ENCODE measurements at regions of chr17 and their contacts with region 1.

Region 1: GRCh38 chr17:73371285-73371684 is 59.5 kb upstream of the CDC42EP4 start:
- DNase-seq: no peak
- ATAC-seq: no peak
- H3K4me3 Mint-ChIP-seq: no peak overlapping the region
- H3K27ac Mint-ChIP-seq: no peak overlapping the region
- H3K4me1 Mint-ChIP-seq: no peaks in the 10 kb centered on the region
- H3K27me3 Mint-ChIP-seq: no peaks in the 10 kb centered on the region

Region 2: DNA sequence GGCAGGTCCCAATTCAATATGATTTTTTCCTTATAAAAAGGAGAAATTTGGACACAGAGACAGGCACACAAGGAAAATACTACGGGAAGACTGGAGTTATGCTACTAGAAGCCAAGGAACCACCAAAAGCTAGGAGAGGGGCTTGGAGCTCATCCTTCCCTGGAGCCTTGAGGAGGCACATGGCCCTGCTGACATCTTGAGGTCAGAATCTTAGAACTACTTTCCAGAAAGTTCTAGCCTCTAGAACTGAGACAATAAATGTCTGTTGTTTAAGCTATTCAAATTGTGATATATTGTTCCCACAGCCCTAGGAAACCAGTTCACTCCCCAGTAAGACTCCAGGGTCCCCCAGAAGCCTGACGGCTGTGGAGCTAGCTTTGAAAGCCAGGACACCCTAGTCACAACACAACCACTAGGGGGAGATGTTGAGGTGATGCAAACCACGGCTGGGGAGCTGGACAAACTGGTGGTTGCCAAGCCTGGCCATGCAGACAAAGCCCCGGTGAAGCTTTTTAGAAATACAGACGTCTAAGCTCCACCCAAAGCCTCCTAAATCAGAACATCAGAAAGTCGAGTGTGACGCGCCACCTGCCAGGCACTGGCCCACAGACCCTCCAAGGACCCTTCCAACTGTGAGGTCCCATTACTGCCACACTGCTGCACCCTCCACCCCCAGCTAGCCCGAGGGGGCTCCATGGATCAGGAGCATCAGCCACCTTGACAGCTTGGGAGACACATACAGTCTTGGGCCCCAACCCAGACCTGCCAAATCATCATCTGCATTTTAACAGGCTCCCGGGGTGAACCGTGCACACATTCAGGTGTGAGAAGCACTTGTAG is 385.2 kb before region 1 on chr17:
- CTCF ChIA-PET with region 1: interaction called, 4 read pairs
- POLR2A ChIA-PET with region 1: no interaction called
- intact Hi-C with region 1: loop called in 1 of 2 experiments (anchors 2 kb)
- DNase-seq: peak; percentile 70
- ATAC-seq: peak; percentile 79
- H3K4me3 Mint-ChIP-seq: no peak overlapping the region
- H3K27ac Mint-ChIP-seq: no peak overlapping the region
- H3K4me1 Mint-ChIP-seq: peaks cover 1% of the 10 kb centered on the region
- H3K27me3 Mint-ChIP-seq: no peaks in the 10 kb centered on the region

Region 3: GRCh38 chr17:73192894-73193701 is 178.2 kb before region 1 on chr17 and contains the start of gene COG1:
- CTCF ChIA-PET with region 1: interaction called, 3 read pairs
- POLR2A ChIA-PET with region 1: no interaction called
- intact Hi-C with region 1: loop called (anchors 1 to 5 kb)
- DNase-seq: peak; percentile 91
- ATAC-seq: peak; percentile 78
- H3K4me3 Mint-ChIP-seq: peak within 1 kb of the TSS; percentile 91
- H3K27ac Mint-ChIP-seq: peak within 1 kb of the TSS; percentile 97
- H3K4me1 Mint-ChIP-seq: peaks cover 18% of the 10 kb centered on the region
- H3K27me3 Mint-ChIP-seq: no peaks in the 10 kb centered on the region
- total RNA-seq, gene COG1: 25.6 to 39.0 TPM

Region 4: GRCh38 chr17:73247726-73248125 is 123.6 kb before region 1 on chr17:
- CTCF ChIA-PET with region 1: interaction called, 98 read pairs
- POLR2A ChIA-PET with region 1: no interaction called
- intact Hi-C with region 1: no loop called
- DNase-seq: no peak
- ATAC-seq: no peak
- H3K4me3 Mint-ChIP-seq: no peak overlapping the region
- H3K27ac Mint-ChIP-seq: no peak overlapping the region
- H3K4me1 Mint-ChIP-seq: no peaks in the 10 kb centered on the region
- H3K27me3 Mint-ChIP-seq: no peaks in the 10 kb centered on the region

Region 5: DNA sequence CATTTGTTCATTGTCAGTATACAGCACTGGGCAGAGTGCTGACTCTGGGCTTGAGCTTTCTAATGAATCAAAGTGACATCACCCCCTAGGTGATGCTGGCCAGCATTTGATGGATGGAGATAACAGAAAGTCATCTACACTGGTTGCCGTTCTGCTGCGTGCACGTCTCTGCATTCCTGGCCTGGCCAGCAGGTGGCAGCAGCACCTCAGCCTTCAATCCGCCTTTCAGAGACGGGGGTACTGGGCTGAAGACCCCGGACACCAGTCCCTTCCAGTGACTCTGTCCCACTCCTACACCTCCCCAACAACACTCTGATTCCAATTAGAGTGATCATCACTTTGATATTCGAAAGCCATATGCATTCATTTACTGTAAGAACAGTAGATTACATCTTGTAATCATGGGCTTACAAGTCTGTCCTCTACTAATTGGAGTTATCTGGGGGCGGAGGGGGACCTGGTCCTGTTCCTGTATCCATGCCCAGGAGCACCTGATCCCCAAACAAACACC is 115.6 kb before region 1 on chr17:
- CTCF ChIA-PET with region 1: interaction called, 98 read pairs
- POLR2A ChIA-PET with region 1: no interaction called
- intact Hi-C with region 1: loop called (anchors 1 kb)
- DNase-seq: peak; percentile 75
- ATAC-seq: peak; percentile 92
- H3K4me3 Mint-ChIP-seq: no peak overlapping the region
- H3K27ac Mint-ChIP-seq: no peak overlapping the region
- H3K4me1 Mint-ChIP-seq: no peaks in the 10 kb centered on the region
- H3K27me3 Mint-ChIP-seq: no peaks in the 10 kb centered on the region

Region 6: GRCh38 chr17:73311781-73312641 is 59.3 kb before region 1 on chr17 and contains the start of gene CDC42EP4:
- CTCF ChIA-PET with region 1: interaction called, 7 read pairs
- POLR2A ChIA-PET with region 1: no interaction called
- intact Hi-C with region 1: loop called in 1 of 2 experiments (anchors 1 kb)
- DNase-seq: peak; percentile 93
- ATAC-seq: peak; percentile 95
- H3K4me3 Mint-ChIP-seq: peak within 1 kb of the TSS; percentile 80
- H3K27ac Mint-ChIP-seq: no peak within 1 kb of the TSS
- H3K4me1 Mint-ChIP-seq: peaks cover 10% of the 10 kb centered on the region
- H3K27me3 Mint-ChIP-seq: peaks cover 2% of the 10 kb centered on the region
- total RNA-seq, gene CDC42EP4: 0.87 to 0.91 TPM

Region 7: GRCh38 chr17:73436954-73437353 is 65.7 kb after region 1 on chr17:
- CTCF ChIA-PET with region 1: no interaction called
- POLR2A ChIA-PET with region 1: no interaction called
- intact Hi-C with region 1: no loop called
- DNase-seq: no peak
- ATAC-seq: no peak
- H3K4me3 Mint-ChIP-seq: no peak overlapping the region
- H3K27ac Mint-ChIP-seq: no peak overlapping the region
- H3K4me1 Mint-ChIP-seq: no peaks in the 10 kb centered on the region
- H3K27me3 Mint-ChIP-seq: no peaks in the 10 kb centered on the region

Measured in activated CD4-positive, alpha-beta T cell treated with anti-CD3 and anti-CD28 coated beads for 36 hours (primary cell).